ENCODE measurements at regions of chr22 and their contacts with region 1.

Region 1: GRCh38 chr22:34414484-34415440 is 494.5 kb upstream of the LARGE1 start:
- DNase-seq: peak; percentile 80 to 90 (median 86)
- H3K4me3 ChIP-seq: no peak overlapping the region
- H3K27ac ChIP-seq: no peak overlapping the region
- H3K4me1 ChIP-seq: no peaks in the 10 kb centered on the region
- H3K27me3 ChIP-seq: no peaks in the 10 kb centered on the region

Region 2: GRCh38 chr22:35023692-35024363 is 609.1 kb after region 1 on chr22:
- CTCF ChIA-PET with region 1: interaction called, 41 read pairs
- POLR2A ChIA-PET with region 1: no interaction called
- DNase-seq: peak; percentile 36 to 67 (median 53)
- H3K4me3 ChIP-seq: no peak overlapping the region
- H3K27ac ChIP-seq: no peak overlapping the region
- H3K4me1 ChIP-seq: no peaks in the 10 kb centered on the region
- H3K27me3 ChIP-seq: no peaks in the 10 kb centered on the region

Measured in common myeloid progenitor, CD34-positive (primary cell).